WTC11 (cell line): ENCODE measurements at regions of chr16 and their contacts with region 1.

Region 1: GRCh38 chr16:81140930-81141780 is 45.0 kb upstream of the GCSH start:
- DNase-seq: peak; percentile 74
- ATAC-seq: peak; percentile 80
- H3K4me3 Mint-ChIP-seq: no peak overlapping the region
- H3K27ac Mint-ChIP-seq: no peak overlapping the region
- H3K4me1 Mint-ChIP-seq: peaks cover 18% of the 10 kb centered on the region
- H3K27me3 Mint-ChIP-seq: no peaks in the 10 kb centered on the region; the same call in 1 of the 2 replicates
- CTCF ChIP-seq: peak; percentile 46

Region 2: DNA sequence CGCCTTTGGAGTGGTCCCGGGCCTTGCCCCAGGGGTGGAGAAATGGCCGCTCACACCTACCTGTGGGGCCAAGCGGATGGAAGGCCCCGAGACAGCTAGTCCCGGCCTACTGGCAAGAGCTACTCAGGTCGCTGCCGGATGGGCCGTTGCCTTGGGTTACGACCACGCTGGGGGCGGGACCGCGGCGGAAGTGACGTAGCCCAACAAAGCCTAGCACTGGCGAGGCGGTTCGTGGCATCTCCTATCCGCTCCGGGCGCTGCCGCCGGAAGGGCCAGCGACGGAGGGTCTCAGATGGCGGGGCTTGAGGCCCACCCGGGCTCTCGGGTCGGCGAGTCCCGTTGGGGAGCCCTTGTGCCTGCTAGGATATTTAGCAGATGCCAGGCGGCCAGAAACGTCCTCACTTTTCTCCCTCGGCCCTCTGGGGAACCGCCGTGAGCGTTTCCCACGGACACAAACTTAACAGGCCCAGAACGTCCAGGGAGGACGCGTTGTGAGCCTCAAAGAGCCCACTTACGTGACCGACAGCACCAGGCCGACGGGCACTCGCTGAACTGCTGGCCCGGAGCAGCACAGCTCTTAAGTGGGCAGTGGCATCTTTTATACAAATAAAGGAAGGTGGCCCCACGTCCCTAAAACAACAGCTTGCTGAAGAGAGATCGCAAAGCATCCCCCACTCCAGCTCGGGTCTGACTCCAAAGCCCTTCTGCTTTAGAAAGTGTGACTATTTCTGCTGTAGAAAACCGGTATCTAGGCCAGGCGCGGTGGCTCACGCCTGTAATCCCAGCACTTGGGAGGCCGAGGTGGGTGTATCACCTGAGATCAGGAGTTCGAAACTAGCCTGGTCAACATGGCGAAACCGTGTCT is 63.8 kb before region 1 on chr16 and contains the start of gene C16orf46:
- CTCF ChIA-PET with region 1: interaction called, 11 read pairs
- POLR2A ChIA-PET with region 1: interaction called, 3 read pairs
- DNase-seq: peak; percentile 99
- ATAC-seq: peak; percentile 89
- H3K4me3 Mint-ChIP-seq: no peak within 1 kb of the TSS
- H3K27ac Mint-ChIP-seq: peak within 1 kb of the TSS; percentile 92
- H3K4me1 Mint-ChIP-seq: peaks cover 20% of the 10 kb centered on the region
- H3K27me3 Mint-ChIP-seq: no peaks in the 10 kb centered on the region; the same call in 1 of the 2 replicates
- CTCF ChIP-seq: no peak
- total RNA-seq, gene C16orf46: 1.1 to 1.3 TPM (median 1.2 TPM) in 3 replicates

Region 3: DNA sequence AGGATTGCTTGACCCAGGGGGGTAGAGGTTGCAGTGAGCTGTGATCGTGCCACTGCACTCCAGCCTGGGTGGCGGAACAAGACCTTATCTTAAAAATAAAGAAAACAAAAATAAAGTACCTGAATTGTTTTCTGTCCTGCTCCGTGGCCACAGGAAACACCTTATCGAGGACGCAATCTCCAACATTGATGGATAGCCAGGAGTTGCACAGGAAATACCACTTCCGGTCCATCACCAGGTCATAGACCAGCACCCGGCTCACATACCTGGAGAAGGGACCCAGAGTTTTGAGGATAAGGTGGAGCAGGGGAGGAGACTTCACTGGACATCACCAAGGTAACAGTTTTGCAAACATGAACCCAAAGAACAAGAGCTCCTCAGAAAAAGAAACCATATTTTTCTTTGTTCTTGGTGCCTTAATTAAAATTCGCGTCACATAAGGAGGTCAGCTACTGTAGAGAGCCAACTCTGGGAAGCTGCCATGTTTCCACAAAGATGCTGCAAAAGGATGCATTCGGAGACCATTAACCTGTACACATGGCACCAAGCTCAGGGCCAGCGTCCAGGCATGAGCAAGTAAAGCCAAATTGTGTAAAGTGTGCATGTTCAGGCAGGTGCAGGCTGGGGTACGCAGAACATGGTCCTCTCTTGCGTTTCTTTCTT is 10.6 kb after region 1 on chr16:
- CTCF ChIA-PET with region 1: interaction called, 11 read pairs
- POLR2A ChIA-PET with region 1: no interaction called
- DNase-seq: no peak
- ATAC-seq: no peak
- H3K4me3 Mint-ChIP-seq: no peak overlapping the region
- H3K27ac Mint-ChIP-seq: no peak overlapping the region
- H3K4me1 Mint-ChIP-seq: no peaks in the 10 kb centered on the region
- H3K27me3 Mint-ChIP-seq: no peaks in the 10 kb centered on the region; the same call in 1 of the 2 replicates
- CTCF ChIP-seq: no peak

Region 4: GRCh38 chr16:81277533-81278080 is 136.5 kb after region 1 on chr16:
- CTCF ChIA-PET with region 1: no interaction called
- POLR2A ChIA-PET with region 1: no interaction called
- DNase-seq: no peak
- ATAC-seq: no peak
- H3K4me3 Mint-ChIP-seq: no peak overlapping the region
- H3K27ac Mint-ChIP-seq: no peak overlapping the region
- H3K4me1 Mint-ChIP-seq: no peaks in the 10 kb centered on the region
- H3K27me3 Mint-ChIP-seq: no peaks in the 10 kb centered on the region
- CTCF ChIP-seq: no peak